ENCODE measurements at regions of chr2 and their contacts with region 1.

Region 1: DNA sequence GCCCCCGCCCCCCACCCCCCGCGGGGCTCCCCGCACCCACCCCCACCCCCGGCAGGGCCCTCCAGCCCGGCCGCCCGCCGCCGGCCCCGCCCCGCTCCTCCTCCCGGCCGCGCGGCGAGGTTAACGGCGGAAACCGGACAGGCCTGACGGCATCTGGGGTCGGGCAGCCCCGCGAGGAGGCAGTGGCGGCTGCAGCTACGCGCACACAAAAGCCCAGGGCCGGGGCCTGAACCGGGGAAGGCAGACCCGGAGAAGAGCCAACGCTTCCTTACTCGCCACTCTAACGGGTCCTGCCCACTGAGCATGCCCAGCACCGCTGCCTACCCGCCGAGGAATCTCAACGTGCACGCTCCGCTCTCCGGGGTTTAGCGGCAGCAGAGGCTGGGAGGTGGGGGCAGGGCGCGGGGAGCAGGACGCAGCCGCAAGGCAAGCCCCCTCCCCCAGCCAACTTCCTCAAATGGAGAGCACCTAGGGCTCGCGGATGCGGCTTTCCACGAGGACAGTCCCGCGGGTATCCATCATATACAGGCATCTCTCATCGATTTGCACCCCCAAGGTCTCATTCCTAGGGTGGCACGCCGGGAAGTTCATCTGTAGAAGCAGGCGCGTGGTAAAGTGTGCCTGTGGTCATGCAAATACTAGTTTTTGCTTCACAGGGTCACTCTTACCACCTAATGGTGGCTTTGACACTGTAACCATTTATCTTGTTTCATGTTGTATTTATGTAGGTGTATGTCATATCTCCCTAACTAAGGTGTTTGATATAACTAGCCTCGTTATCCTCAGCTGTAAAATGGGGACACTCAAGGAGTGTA is at the start of gene MEMO1:
- DNase-seq: peak; percentile 89
- H3K4me3 Mint-ChIP-seq: peak within 1 kb of the TSS; percentile 92
- H3K27ac Mint-ChIP-seq: peak within 1 kb of the TSS; percentile 97
- H3K4me1 Mint-ChIP-seq: peaks cover 41% of the 10 kb centered on the region
- H3K27me3 Mint-ChIP-seq: no peaks in the 10 kb centered on the region
- total RNA-seq, gene MEMO1: 66.6 and 71.3 TPM in 2 replicates

Region 2: DNA sequence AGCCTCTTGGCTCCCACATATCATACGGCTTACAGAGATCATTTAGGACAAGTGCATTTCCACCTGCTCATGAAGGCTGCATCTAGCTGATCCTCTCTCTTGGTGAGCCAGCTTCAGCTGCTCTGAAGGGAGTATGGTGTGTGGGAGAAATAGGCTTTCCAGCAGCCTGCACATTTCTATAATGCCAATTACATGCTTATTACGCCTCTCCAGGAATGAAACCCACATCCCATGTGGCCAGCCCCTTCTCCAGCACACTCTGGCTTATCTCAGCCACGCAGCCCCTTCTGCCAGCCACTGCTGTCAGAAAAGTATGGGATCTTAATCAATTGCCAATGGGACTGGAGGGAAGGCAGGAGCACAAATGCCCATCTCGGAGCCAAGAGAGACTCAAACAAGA is 990.2 kb before region 1 on chr2:
- intact Hi-C with region 1: no loop called
- DNase-seq: no peak
- H3K4me3 Mint-ChIP-seq: no peak overlapping the region
- H3K27ac Mint-ChIP-seq: no peak overlapping the region
- H3K4me1 Mint-ChIP-seq: no peaks in the 10 kb centered on the region
- H3K27me3 Mint-ChIP-seq: peaks cover 1% of the 10 kb centered on the region

Region 3: GRCh38 chr2:31233741-31234682 is 776.9 kb before region 1 on chr2 and contains the start of gene EHD3:
- intact Hi-C with region 1: loop called (anchors 5 kb)
- DNase-seq: peak; percentile 77
- H3K4me3 Mint-ChIP-seq: peak within 1 kb of the TSS; percentile 75
- H3K27ac Mint-ChIP-seq: no peak within 1 kb of the TSS
- H3K4me1 Mint-ChIP-seq: peaks cover 12% of the 10 kb centered on the region
- H3K27me3 Mint-ChIP-seq: peaks cover 13% of the 10 kb centered on the region
- total RNA-seq, gene EHD3: 1.9 and 2.1 TPM in 2 replicates

Region 4: GRCh38 chr2:31877008-31877407 is 133.9 kb before region 1 on chr2:
- intact Hi-C with region 1: no loop called
- DNase-seq: no peak
- H3K4me3 Mint-ChIP-seq: no peak overlapping the region
- H3K27ac Mint-ChIP-seq: no peak overlapping the region
- H3K4me1 Mint-ChIP-seq: no peaks in the 10 kb centered on the region
- H3K27me3 Mint-ChIP-seq: no peaks in the 10 kb centered on the region

Region 5: DNA sequence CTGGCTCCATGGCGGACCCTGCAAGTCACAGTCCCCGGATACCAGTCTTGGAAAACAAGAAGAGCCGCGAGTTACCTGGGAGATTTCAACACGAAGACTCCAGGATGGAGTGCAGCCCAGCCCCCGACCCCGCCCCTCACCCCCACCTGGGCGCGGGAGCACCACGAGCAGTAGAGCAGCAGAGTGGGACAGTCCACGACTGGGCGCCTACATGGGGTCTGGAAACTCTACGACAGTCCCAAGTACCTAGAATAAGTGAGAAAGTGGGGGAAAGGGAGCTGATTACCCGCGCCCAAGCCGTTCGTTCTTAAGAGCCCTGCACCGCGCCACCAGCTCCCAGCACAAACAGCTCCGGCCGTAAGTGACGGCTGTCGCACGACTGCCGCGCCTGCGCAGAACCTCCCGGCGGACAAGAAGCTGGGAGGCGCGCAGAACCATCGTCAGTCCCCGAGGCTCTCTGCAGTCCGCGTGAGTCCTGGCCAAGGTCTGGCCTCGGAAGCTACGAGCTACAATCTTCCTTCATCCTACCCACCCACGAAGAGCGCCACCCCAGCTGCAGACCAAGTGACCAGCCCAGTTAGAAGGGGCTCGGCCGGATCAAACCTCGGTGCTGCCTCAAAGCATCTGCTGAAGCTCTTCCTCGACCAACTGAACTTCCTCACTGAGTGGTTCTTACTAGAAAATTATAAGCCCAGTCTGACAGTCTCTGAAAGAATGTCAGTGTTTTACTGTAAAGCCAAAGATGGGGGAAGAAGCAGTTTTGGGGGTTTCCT is 28.8 kb after region 1 on chr2 and contains the start of gene DPY30:
- intact Hi-C with region 1: loop called (anchors 1 kb)
- DNase-seq: peak; percentile 86
- H3K4me3 Mint-ChIP-seq: peak within 1 kb of the TSS; percentile 93
- H3K27ac Mint-ChIP-seq: peak within 1 kb of the TSS; percentile 93
- H3K4me1 Mint-ChIP-seq: peaks cover 17% of the 10 kb centered on the region
- H3K27me3 Mint-ChIP-seq: peaks cover 1% of the 10 kb centered on the region
- total RNA-seq, gene DPY30: 64.6 and 72.5 TPM in 2 replicates

Region 6: GRCh38 chr2:32168513-32168912 is 157.6 kb after region 1 on chr2:
- intact Hi-C with region 1: loop called (anchors 1 kb)
- DNase-seq: no peak
- H3K4me3 Mint-ChIP-seq: no peak overlapping the region
- H3K27ac Mint-ChIP-seq: no peak overlapping the region
- H3K4me1 Mint-ChIP-seq: peaks cover 44% of the 10 kb centered on the region
- H3K27me3 Mint-ChIP-seq: no peaks in the 10 kb centered on the region

Region 7: DNA sequence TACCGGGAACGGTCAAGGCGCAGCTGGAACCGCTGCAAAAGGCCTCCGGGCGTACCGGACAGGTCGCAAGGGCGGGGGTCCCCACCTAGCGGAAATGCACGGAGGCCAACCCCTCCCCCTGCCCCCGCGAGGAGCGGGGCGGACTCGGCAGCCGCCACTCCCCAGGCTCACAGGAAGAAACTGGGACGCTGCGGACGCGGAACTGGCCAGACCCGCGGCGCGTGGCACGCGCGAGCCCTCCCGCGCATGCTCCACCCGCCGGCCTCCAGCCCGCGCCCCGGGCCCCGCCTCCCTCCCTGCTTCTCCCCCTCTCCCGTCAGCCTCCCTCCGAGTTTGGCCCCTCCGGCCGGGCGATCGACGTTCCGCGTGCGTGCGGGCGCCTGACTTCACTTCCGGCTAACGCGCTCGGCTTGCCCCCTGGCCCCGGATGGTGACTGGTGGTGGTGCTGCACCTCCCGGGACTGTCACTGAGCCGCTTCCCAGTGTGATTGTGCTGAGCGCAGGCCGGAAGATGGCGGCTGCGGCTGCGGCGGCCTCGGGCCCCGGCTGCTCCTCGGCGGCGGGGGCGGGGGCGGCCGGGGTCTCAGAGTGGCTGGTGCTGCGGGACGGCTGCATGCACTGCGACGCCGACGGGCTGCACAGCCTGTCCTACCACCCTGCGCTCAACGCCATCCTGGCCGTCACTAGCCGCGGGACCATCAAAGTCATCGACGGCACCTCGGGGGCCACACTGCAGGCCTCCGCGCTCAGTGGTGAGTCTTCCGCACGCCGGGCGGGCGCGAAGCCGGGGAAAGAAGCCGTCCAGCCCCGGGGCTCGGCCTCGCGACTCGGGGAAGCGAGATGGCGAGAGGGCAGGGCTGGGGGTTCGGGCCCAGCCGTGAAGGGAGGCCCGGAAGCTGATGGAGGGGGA is 346.1 kb after region 1 on chr2 and contains the start of gene BIRC6:
- intact Hi-C with region 1: loop called (anchors 1 kb)
- DNase-seq: peak; percentile 92
- H3K4me3 Mint-ChIP-seq: peak within 1 kb of the TSS; percentile 89
- H3K27ac Mint-ChIP-seq: peak within 1 kb of the TSS; percentile 96
- H3K4me1 Mint-ChIP-seq: peaks cover 40% of the 10 kb centered on the region
- H3K27me3 Mint-ChIP-seq: no peaks in the 10 kb centered on the region
- total RNA-seq, gene BIRC6: 112 and 123 TPM in 2 replicates

Region 8: DNA sequence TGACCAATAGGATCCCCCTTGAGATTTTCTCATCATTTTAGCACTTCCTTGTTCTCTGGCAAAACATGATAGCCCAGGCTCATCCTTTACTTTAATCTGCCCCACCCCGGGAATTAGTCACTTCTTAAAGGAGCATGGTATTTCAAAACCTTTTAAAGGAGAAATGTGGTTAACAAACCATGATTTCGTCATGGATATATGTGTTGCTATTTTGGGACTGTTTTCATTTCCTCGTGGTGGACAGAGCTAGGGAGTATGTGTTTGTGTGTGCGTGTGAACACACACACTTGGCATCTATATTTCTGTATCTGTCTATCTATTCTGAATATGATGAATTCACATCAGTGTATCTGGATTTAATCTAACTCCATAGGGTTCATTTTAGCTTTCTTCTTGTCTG is 474.1 kb after region 1 on chr2:
- intact Hi-C with region 1: no loop called
- DNase-seq: no peak
- H3K4me3 Mint-ChIP-seq: no peak overlapping the region
- H3K27ac Mint-ChIP-seq: peak overlapping the region; percentile 25
- H3K4me1 Mint-ChIP-seq: peaks cover 17% of the 10 kb centered on the region
- H3K27me3 Mint-ChIP-seq: no peaks in the 10 kb centered on the region

Measured in activated T-helper 1 cell treated with anti-CD3 and anti-CD28 coated beads, Interleukin-12 subunit alpha, Interleukin-12 subunit beta, Interleukin-2, Interleukin-4 antibody, amounts not matched to agents 30 ng/mL and 10 ng/mL and 1 ng/mL, durations not matched to agents 14 hours and 24 hours and 36 hours (primary cell).